ENCODE measurements at regions of chr10 and their contacts with region 1.

Region 1: GRCh38 chr10:96129387-96130325 is at the start of gene ZNF518A:
- DNase-seq: peak; percentile 90 to 95 (median 94)
- H3K4me3 ChIP-seq: peak within 1 kb of the TSS; percentile 96 to 99
- H3K4me3 Mint-ChIP-seq: peak within 1 kb of the TSS; percentile 90 to 98 (median 96)
- H3K27ac ChIP-seq: peak within 1 kb of the TSS; percentile 97
- H3K27ac Mint-ChIP-seq: peak within 1 kb of the TSS; percentile 99 to 100 (median 99)
- H3K4me1 ChIP-seq: peaks cover 17% of the 10 kb centered on the region
- H3K4me1 Mint-ChIP-seq: peaks cover 11 to 23% (median 17%) of the 10 kb centered on the region in 4 donors
- H3K27me3 ChIP-seq: peaks cover 9% of the 10 kb centered on the region
- H3K27me3 Mint-ChIP-seq: peaks cover 20 to 31% of the 10 kb centered on the region in 2 donors
- total RNA-seq, gene ZNF518A: 22.4 to 24.0 TPM

Region 2: DNA sequence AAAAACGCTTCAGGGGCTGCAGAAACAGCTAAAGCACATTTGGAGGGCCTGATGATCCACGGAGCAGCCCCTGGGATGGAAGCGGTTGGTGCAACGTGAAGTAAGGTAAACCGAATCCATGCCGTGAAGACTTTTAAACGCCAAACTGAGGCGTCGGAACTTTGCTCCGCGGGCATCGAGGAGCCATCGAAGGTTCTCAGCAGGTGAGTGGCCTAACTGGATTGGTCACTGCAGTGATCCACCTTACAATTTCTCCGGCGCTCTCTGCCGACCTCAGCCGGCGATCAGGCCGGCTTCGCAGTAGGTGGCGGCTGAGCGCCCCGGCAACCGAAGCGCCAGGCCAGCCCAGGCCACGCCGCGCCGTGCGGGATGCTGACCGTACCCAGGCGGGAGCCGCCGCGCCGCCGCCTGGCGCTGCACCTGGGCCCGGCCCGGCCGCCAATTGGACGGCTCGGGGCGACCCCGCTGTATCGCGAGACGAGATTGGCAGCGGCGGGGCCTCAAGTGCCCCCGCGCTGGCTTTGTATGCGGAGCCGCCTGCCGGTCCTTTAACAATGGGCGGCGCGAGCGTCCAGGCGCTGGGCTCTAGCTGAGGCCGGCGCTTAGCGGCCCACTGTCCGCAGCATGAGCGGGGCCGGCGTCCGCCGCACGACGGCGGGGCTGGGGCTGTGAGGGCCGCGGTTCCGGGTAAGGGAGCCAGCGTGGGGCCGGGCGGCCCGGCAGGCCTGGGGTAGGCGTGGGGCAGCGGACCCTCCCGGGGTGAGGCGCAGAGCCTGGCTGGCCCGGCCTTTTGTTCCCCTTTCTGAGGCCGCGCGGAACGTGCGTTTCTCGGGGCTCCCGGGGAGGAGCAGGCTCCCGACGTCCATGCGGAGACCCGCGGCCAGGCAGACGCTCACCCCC is 86.4 kb before region 1 on chr10 and contains the start of gene CCNJ:
- CTCF ChIA-PET with region 1: no interaction called
- POLR2A ChIA-PET with region 1: interaction called, 25 read pairs
- intact Hi-C with region 1: loop called (anchors 1 kb)
- DNase-seq: peak; percentile 77 to 87 (median 85)
- H3K4me3 ChIP-seq: peak within 1 kb of the TSS; percentile 60 to 69
- H3K4me3 Mint-ChIP-seq: peak within 1 kb of the TSS; percentile 91 to 96 (median 92)
- H3K27ac ChIP-seq: peak within 1 kb of the TSS; percentile 64
- H3K27ac Mint-ChIP-seq: peak within 1 kb of the TSS; percentile 54 to 95 (median 92)
- H3K4me1 ChIP-seq: peaks cover 19% of the 10 kb centered on the region
- H3K4me1 Mint-ChIP-seq: peaks cover 26 to 48% (median 36%) of the 10 kb centered on the region in 4 donors
- H3K27me3 ChIP-seq: no peaks in the 10 kb centered on the region
- H3K27me3 Mint-ChIP-seq: peaks cover 3 to 6% of the 10 kb centered on the region in 2 donors
- total RNA-seq, gene CCNJ: 7.1 TPM

Region 3: DNA sequence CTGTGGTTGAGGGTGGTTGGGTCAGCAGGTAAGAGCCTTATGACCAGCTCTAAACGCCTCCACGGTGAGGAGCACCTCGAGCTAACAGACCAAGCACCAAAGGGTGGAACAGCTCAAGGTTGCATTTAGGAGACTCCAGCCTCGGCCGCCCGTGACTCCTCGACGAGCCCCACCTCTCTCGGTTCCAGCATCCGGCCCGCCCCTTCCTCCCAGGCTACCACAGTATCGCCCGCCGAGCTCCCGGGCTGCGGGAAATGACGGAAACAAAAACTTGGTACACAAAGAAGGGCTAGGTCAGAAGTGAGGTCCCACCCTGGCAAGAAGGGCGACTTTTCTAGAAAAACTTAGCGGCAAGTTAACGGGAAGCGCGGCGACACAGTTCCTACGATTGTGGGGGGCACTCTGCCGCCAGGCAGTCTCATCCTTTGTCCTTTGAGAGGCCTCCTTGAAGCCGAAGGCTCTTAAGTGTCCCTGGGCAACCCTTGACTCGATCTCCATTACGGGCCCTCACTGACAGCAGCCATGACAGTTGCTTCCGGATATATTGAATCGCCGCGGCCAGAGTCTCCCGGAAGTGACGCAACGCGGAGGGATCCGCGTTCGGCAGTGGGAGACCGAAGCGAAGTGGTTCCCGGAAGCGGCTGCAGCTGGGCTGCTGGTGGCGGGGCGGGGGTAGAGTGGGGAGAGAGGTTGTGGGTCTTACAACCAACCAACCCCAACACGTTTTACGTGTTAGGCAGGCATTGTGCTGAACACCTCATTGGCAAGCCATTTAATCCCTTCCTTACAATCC is 39.8 kb before region 1 on chr10:
- CTCF ChIA-PET with region 1: interaction called, 34 read pairs
- POLR2A ChIA-PET with region 1: interaction called, 378 read pairs
- intact Hi-C with region 1: loop called (anchors 1 kb)
- DNase-seq: peak; percentile 89 to 94 (median 91)
- H3K4me3 ChIP-seq: peak overlapping the region; percentile 71 to 88
- H3K4me3 Mint-ChIP-seq: peak overlapping the region; percentile 91 to 97 (median 96)
- H3K27ac ChIP-seq: peak overlapping the region; percentile 91
- H3K27ac Mint-ChIP-seq: peak overlapping the region; percentile 98 to 100 (median 99)
- H3K4me1 ChIP-seq: peaks cover 12% of the 10 kb centered on the region
- H3K4me1 Mint-ChIP-seq: peaks cover 5 to 11% (median 7%) of the 10 kb centered on the region in 4 donors
- H3K27me3 ChIP-seq: peaks cover 9% of the 10 kb centered on the region
- H3K27me3 Mint-ChIP-seq: peaks cover 23 to 26% of the 10 kb centered on the region in 2 donors

Region 4: DNA sequence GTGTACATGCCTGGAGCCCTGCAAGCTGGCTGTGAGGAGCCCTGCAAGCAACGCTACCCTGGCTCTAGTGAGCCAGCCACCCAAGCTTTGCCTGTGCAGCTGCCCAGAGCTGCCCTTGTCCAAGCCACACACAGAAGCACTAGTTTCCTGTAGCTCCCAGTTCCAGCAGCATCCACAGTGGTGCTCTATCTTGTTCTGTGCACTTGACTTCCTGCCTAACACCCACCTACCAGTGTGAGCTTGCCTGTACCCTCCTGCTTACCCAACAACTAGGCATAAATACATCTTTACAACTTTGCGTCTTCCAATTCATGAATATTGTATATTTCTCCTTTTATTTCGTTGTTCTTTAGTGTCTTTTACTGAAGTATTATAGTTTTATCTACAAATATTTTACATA is 31.8 kb before region 1 on chr10:
- CTCF ChIA-PET with region 1: no interaction called
- POLR2A ChIA-PET with region 1: interaction called, 31 read pairs
- intact Hi-C with region 1: no loop called
- DNase-seq: peak in 1 of 5 donors; percentile 26
- H3K4me3 ChIP-seq: no peak overlapping the region
- H3K4me3 Mint-ChIP-seq: no peak overlapping the region
- H3K27ac ChIP-seq: no peak overlapping the region
- H3K27ac Mint-ChIP-seq: no peak overlapping the region
- H3K4me1 ChIP-seq: no peaks in the 10 kb centered on the region
- H3K4me1 Mint-ChIP-seq: no peaks in the 10 kb centered on the region
- H3K27me3 ChIP-seq: peaks cover 39% of the 10 kb centered on the region
- H3K27me3 Mint-ChIP-seq: peaks cover 61 to 66% of the 10 kb centered on the region in 2 donors

Region 5: DNA sequence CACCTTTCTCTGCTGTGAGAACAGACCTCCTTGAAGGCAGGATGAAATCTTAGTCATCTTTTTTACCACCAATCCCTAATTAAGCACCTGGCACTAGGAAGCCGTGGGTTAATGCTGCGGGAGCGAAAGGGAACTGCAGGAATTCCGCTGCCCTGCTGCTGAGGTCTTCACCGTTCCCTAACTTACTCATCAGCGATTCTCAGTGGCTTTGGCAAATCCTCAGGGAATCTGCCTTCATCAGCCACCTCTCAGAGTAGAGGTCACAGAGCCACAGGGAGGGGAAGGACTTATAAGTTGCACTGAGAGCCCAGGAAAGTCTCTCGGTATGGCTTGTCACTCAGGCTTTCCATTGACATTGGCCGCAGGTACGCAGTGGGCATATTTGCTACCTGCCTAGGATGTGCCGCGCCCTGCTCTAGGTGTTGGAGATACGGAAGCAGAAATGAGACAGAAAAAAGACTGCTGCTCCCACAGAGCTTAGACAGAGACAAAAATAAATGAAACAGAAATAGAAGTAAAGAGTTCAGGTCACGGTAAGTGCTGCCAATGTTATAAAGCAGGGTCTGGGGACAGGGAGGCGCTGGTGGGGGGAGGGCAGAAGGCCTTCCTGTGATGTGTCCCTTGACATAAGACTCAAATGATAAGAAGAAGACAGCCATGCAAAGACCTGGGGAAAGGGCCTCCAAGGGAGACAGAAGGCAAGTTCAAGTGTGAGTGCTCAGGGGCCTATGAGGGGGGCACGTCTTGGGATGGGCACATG is 301.7 kb after region 1 on chr10:
- CTCF ChIA-PET with region 1: no interaction called
- POLR2A ChIA-PET with region 1: no interaction called
- intact Hi-C with region 1: no loop called
- DNase-seq: no peak
- H3K4me3 ChIP-seq: no peak overlapping the region
- H3K4me3 Mint-ChIP-seq: no peak overlapping the region
- H3K27ac ChIP-seq: no peak overlapping the region
- H3K27ac Mint-ChIP-seq: no peak overlapping the region
- H3K4me1 ChIP-seq: no peaks in the 10 kb centered on the region
- H3K4me1 Mint-ChIP-seq: no peaks in the 10 kb centered on the region
- H3K27me3 ChIP-seq: no peaks in the 10 kb centered on the region
- H3K27me3 Mint-ChIP-seq: peaks cover 18% of the 10 kb centered on the region in 2 donors

Measured in CD4-positive, alpha-beta memory T cell (primary cell).